Activated CD4-positive, alpha-beta memory T cell treated with anti-CD3 and anti-CD28 coated beads for 36 hours (primary cell): ENCODE measurements at regions of chr4 and their contacts with region 1.

Region 1: DNA sequence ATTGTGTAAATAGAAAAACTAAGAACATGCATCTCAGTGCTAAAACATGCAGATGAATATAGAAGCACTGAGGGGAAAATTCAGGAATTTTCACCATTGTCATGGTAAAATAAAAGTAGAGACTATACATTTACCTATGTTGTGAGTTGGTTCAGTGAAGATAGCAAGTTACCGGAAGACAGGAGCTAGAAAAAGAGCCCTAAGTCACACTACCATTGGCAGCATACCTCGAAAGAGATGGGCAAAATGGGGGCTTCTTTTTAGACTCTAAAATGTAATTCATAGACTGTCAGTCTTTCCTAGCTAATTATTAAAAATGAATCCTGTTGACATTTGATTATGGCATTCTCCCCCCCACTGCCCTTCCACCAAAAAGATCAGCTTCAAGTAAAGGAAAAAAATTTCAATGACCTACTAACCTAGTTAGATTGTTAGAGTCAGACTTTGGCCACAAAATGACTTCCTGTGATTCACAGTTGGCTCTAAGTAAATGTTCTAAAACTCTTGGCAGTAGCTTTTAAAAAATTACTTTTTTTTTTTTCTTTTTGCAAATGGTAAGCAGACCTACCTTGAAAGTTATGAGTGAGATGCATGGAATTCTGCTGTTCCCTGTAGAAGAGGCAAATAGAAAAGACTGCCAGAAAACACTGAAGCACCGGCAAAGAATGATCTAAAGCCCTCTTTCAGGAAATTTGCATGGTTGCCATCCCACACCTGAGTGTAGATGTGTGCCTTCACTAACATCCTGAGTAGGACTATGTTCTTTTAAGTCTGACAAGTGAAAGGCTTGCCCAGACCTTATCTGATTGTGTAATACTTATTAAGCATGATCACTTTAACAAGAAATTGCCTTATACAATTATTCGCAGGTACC is 26.4 kb upstream of the ARSJ start:
- DNase-seq: no peak
- H3K4me3 Mint-ChIP-seq: no peak overlapping the region
- H3K27ac Mint-ChIP-seq: peak overlapping the region; percentile 4
- H3K4me1 Mint-ChIP-seq: peaks cover 13% of the 10 kb centered on the region
- H3K27me3 Mint-ChIP-seq: no peaks in the 10 kb centered on the region

Region 2: GRCh38 chr4:113958766-113959538 is 46.9 kb before region 1 on chr4:
- CTCF ChIA-PET with region 1: no interaction called
- POLR2A ChIA-PET with region 1: no interaction called
- intact Hi-C with region 1: loop called (anchors 5 kb)
- DNase-seq: no peak
- H3K4me3 Mint-ChIP-seq: no peak overlapping the region
- H3K27ac Mint-ChIP-seq: no peak overlapping the region
- H3K4me1 Mint-ChIP-seq: peaks cover 3% of the 10 kb centered on the region
- H3K27me3 Mint-ChIP-seq: no peaks in the 10 kb centered on the region

Region 3: GRCh38 chr4:114180481-114180880 is 174.7 kb after region 1 on chr4:
- CTCF ChIA-PET with region 1: no interaction called
- POLR2A ChIA-PET with region 1: no interaction called
- intact Hi-C with region 1: no loop called
- DNase-seq: peak; percentile 46
- H3K4me3 Mint-ChIP-seq: no peak overlapping the region
- H3K27ac Mint-ChIP-seq: no peak overlapping the region
- H3K4me1 Mint-ChIP-seq: no peaks in the 10 kb centered on the region
- H3K27me3 Mint-ChIP-seq: no peaks in the 10 kb centered on the region

Region 4: GRCh38 chr4:114464726-114465272 is 459.0 kb after region 1 on chr4:
- CTCF ChIA-PET with region 1: no interaction called
- POLR2A ChIA-PET with region 1: no interaction called
- intact Hi-C with region 1: no loop called
- DNase-seq: no peak
- H3K4me3 Mint-ChIP-seq: no peak overlapping the region
- H3K27ac Mint-ChIP-seq: no peak overlapping the region
- H3K4me1 Mint-ChIP-seq: no peaks in the 10 kb centered on the region
- H3K27me3 Mint-ChIP-seq: peaks cover 5% of the 10 kb centered on the region